ENCODE measurements at regions of chr16 and their contacts with region 1.

Region 1: DNA sequence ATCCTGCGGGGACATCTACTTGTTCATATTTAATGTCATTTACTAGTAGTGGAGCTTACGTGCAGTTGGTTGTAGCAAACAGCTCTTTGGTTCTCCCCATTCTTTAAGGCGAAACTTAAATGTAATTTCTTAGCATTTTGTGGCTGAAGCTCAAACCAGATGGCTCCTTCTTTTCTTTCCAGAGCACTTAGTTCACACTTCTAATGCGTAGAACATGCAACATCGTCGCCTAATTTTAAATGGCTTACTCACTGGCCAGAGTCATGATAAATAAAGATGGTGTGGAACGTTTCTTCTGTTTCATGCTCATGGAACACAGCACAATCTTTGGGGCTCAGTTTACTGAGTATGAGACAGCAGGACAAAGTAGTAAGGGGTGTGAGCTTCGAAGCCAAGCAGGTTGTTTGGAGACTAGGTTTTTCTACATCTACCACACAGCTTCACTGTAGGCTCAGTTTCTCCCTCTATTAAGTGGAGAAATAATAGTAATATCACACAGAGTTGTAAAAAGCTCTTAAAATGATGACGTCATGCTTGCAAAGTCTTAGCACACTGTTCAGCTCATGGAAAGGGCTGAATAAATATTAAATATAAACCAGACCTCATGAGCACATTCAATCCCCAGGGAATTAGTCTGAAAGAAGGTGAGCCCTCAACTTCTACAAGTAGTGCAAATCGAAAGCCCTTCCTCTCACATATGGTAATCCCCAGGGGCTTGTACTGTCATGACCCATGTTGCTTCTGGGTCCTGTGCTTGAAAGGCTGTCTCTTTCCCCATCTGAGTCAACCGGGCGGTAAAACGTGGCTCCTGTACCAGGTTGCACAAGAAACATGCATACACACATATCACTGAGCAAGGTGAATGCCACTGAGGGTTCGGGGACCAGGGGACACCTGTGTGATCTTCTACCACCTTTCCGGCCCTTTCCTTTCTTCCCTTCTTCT is 384.3 kb downstream of the CDH13 start:
- DNase-seq: no peak
- ATAC-seq: no peak
- H3K4me3 ChIP-seq: no peak overlapping the region
- H3K27ac ChIP-seq: peak overlapping the region; percentile 93 to 97
- H3K4me1 ChIP-seq: peaks cover 4 to 8% of the 10 kb centered on the region in 2 donors
- H3K27me3 ChIP-seq: no peaks in the 10 kb centered on the region

Region 2: GRCh38 chr16:82761236-82761635 is 249.8 kb before region 1 on chr16:
- intact Hi-C with region 1: loop called in 1 of 2 experiments (anchors 5 kb)
- DNase-seq: peak; percentile 84 to 93
- ATAC-seq: peak; percentile 75
- H3K4me3 ChIP-seq: peak overlapping the region in 1 of 2 donors; percentile 21
- H3K27ac ChIP-seq: peak overlapping the region in 1 of 2 donors; percentile 75
- H3K4me1 ChIP-seq: peaks cover 7 to 13% of the 10 kb centered on the region in 2 donors
- H3K27me3 ChIP-seq: no peaks in the 10 kb centered on the region

Measured in aorta (tissue), 5 donors.